ENCODE measurements at regions of chr5 and their contacts with region 1.

Region 1: DNA sequence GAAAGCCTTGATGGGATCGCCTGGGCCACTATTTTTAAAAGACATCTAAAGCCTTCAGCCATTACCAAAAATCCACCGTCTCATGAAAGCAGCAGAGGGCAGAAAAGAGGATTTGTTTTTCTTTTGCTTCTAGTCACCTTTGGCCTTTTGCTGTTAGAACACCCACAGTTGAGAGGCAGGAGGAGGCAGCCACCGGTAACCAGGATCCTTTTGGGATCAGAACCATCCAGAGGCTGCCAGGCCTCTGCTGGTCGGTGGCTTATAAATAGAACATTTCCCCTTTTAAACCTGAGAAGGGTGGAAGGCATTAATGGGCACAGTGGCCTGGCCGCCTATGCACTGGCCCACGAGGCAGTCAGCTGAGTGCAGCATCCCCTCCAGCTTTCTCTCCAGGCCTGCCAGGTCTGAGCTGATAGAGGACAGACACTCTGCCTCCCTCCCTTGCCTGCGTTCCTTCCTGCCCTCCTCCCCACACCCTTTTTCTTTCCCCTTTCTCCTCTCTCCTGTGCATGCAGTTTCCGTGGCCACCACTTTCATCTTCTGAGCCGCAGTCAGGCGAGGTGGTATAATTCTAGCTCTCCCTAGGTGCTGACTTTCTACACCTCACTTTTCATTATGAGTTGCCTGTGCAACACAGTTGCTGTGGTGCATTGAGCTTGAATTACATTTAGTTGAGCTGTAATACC is 253.4 kb downstream of the ARHGAP26 start:
- DNase-seq: no peak
- H3K4me3 ChIP-seq: no peak overlapping the region
- H3K27ac ChIP-seq: peak overlapping the region in 1 of 2 donors; percentile 50
- H3K4me1 ChIP-seq: no peaks in the 10 kb centered on the region
- H3K27me3 ChIP-seq: no peaks in the 10 kb centered on the region
- CTCF ChIP-seq: no peak
- POLR2A ChIP-seq: no peak

Region 2: GRCh38 chr5:142201471-142201887 is 822.1 kb before region 1 on chr5:
- intact Hi-C with region 1: loop called (anchors 5 kb)
- DNase-seq: no peak
- H3K4me3 ChIP-seq: no peak overlapping the region
- H3K27ac ChIP-seq: no peak overlapping the region
- H3K4me1 ChIP-seq: no peaks in the 10 kb centered on the region
- H3K27me3 ChIP-seq: no peaks in the 10 kb centered on the region
- CTCF ChIP-seq: no peak
- POLR2A ChIP-seq: no peak

Region 3: DNA sequence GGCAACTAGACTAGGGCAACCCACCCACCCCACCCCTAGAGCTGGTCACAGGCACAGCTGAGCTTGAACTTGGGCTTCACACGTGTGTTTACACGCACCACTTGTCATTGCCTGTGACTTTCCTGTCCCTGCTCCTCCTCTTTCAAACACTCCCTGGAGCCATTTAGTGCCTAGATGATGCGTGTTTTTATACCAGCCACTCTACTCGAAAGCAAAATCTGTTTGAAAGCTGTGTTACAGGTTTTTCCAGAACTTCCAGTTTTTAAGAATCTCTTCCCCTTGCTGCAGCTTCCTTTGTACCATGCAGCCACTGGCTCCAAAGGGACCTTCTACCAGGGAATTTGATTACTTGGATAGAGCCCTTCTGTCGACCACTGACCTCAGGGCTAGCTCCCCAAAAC is 620.0 kb before region 1 on chr5:
- intact Hi-C with region 1: no loop called
- DNase-seq: peak in 1 of 2 donors; percentile 29
- H3K4me3 ChIP-seq: no peak overlapping the region
- H3K27ac ChIP-seq: peak overlapping the region; percentile 66 to 82
- H3K4me1 ChIP-seq: no peaks in the 10 kb centered on the region
- H3K27me3 ChIP-seq: peaks cover 0 to 2% of the 10 kb centered on the region in 2 donors
- CTCF ChIP-seq: no peak
- POLR2A ChIP-seq: no peak

Region 4: GRCh38 chr5:143403593-143404415 is 380.2 kb after region 1 on chr5 and contains the start of gene NR3C1:
- intact Hi-C with region 1: loop called (anchors 10 kb)
- DNase-seq: peak; percentile 74 to 81
- H3K4me3 ChIP-seq: peak within 1 kb of the TSS; percentile 90 to 92 (median 91)
- H3K27ac ChIP-seq: peak within 1 kb of the TSS; percentile 96 to 99
- H3K4me1 ChIP-seq: no peaks in the 10 kb centered on the region
- H3K27me3 ChIP-seq: no peaks in the 10 kb centered on the region
- CTCF ChIP-seq: peak in 1 of 3 donors; percentile 58
- POLR2A ChIP-seq: no peak
- total RNA-seq, gene NR3C1: 51.1 to 122 (median 69.7) TPM

Measured in breast epithelium (tissue), 4 donors.